ENCODE measurements at regions of chr15 and their contacts with region 1.

Region 1: DNA sequence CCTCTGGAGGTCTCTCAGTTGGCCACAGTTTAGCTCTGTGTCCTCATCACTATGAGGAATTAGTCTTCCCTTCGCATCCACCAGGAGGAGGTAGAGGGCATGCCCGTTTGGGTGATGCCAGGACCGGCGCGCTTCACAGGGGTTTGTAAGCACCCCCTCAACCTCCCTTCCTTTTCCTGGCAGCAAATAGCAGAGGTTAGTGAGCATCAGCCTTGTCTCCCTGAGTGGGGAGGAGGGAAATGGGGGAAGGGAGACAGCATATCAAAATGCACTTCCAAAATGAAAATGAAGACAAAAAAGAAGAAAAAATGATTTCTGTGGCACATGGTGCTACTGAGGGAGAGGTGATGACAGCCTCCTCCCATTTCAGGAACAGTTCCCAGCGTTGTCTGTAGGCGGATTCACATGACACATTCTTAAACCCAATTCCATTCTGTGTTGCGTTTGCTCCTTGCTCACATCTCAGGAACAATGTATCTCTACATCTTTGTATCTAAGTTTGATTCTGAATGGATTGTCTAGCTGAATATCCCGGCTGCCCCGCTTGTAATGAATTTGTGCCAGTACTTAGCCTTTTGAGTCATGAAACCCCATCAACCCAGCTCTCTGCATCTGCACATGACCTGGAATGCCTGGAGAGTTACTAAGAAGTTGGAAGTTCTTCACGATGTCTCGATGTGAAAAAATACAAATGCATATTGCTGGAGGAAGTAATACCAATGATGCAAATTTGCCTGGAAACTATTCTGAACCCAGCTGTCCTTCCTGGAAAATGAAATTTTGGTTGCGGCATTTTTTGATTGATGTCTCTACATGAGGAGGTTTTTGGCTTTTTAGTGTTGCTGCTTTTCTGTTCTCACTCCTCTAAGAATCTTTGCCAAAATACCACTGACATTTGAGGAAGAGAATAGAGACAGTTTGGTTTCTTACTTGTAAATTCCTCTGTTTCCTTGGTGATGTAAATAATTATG is 45.2 kb downstream of the TYRO3 start:
- DNase-seq: peak; percentile 64
- H3K4me3 Mint-ChIP-seq: peak overlapping the region; percentile 60
- H3K27ac Mint-ChIP-seq: no peak overlapping the region
- H3K4me1 Mint-ChIP-seq: peaks cover 11% of the 10 kb centered on the region
- H3K27me3 Mint-ChIP-seq: peaks cover 10% of the 10 kb centered on the region

Region 2: GRCh38 chr15:41585127-41586047 is 18.8 kb before region 1 on chr15:
- CTCF ChIA-PET with region 1: interaction called, 17 read pairs
- POLR2A ChIA-PET with region 1: no interaction called
- intact Hi-C with region 1: no loop called
- DNase-seq: peak; percentile 59
- H3K4me3 Mint-ChIP-seq: peak overlapping the region; percentile 57
- H3K27ac Mint-ChIP-seq: no peak overlapping the region
- H3K4me1 Mint-ChIP-seq: peaks cover 7% of the 10 kb centered on the region
- H3K27me3 Mint-ChIP-seq: peaks cover 20% of the 10 kb centered on the region